ENCODE measurements at regions of chr6 and their contacts with region 1.

Region 1: DNA sequence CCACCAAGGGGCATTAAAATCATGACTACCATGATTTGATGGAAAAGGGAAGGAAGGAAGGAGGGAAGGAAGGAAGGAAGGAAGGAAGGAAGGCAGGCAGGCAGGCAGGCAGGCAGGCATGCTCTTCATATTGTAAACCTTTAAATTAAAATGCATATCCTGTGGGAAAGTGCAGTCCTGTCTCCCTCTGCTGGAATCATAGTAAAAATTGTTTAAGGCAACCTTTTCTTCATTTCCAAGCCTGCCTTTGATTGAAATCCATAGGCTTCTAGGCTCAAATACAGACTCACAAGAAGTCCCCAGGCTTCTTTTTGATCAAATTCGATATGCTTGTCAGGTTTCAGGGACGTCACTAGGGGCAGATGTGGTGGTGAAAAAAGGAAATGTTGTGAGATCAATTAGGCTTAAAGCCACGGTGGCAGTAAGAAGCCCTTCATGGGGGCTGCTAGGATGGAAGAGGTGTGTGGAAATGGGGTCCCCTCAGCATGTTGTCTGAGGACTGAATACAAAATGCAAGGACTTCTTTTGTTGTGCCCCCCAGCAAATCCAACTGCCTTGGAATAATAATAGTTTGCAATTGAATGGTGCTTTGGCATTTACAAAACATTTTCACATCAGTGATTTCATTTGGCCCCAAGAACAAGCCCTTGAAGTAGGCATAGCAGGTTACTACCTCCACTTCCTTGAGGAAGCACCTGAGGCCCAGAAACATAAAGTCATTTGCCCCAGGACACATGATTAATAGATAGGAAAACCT is 25.6 kb upstream of the GABRR1 start:
- DNase-seq: no peak
- ATAC-seq: no peak
- H3K4me3 Mint-ChIP-seq: no peak overlapping the region
- H3K27ac Mint-ChIP-seq: no peak overlapping the region
- H3K4me1 Mint-ChIP-seq: peaks cover 13% of the 10 kb centered on the region
- H3K27me3 Mint-ChIP-seq: peaks cover 13% of the 10 kb centered on the region
- CTCF ChIP-seq: no peak

Region 2: GRCh38 chr6:89122625-89123024 is 120.1 kb before region 1 on chr6:
- CTCF ChIA-PET with region 1: no interaction called
- POLR2A ChIA-PET with region 1: no interaction called
- intact Hi-C with region 1: loop called (anchors 1 kb)
- DNase-seq: no peak
- ATAC-seq: peak; percentile 31
- H3K4me3 Mint-ChIP-seq: no peak overlapping the region
- H3K27ac Mint-ChIP-seq: no peak overlapping the region
- H3K4me1 Mint-ChIP-seq: no peaks in the 10 kb centered on the region
- H3K27me3 Mint-ChIP-seq: no peaks in the 10 kb centered on the region
- CTCF ChIP-seq: no peak

Measured in activated B cell treated with CpG ODN at 0.5 μM for 24 hours (primary cell).